Activated B cell treated with CpG ODN at 0.5 μM for 24 hours (primary cell): ENCODE measurements at regions of chr12 and their contacts with region 1.

Region 1: GRCh38 chr12:120086801-120087621 is 29.5 kb downstream of the RAB35 start:
- DNase-seq: peak; percentile 98
- ATAC-seq: peak; percentile 93
- H3K4me3 Mint-ChIP-seq: peak overlapping the region; percentile 76
- H3K27ac Mint-ChIP-seq: peak overlapping the region; percentile 81
- H3K4me1 Mint-ChIP-seq: peaks cover 11% of the 10 kb centered on the region
- H3K27me3 Mint-ChIP-seq: no peaks in the 10 kb centered on the region
- CTCF ChIP-seq: peak; percentile 74

Region 2: DNA sequence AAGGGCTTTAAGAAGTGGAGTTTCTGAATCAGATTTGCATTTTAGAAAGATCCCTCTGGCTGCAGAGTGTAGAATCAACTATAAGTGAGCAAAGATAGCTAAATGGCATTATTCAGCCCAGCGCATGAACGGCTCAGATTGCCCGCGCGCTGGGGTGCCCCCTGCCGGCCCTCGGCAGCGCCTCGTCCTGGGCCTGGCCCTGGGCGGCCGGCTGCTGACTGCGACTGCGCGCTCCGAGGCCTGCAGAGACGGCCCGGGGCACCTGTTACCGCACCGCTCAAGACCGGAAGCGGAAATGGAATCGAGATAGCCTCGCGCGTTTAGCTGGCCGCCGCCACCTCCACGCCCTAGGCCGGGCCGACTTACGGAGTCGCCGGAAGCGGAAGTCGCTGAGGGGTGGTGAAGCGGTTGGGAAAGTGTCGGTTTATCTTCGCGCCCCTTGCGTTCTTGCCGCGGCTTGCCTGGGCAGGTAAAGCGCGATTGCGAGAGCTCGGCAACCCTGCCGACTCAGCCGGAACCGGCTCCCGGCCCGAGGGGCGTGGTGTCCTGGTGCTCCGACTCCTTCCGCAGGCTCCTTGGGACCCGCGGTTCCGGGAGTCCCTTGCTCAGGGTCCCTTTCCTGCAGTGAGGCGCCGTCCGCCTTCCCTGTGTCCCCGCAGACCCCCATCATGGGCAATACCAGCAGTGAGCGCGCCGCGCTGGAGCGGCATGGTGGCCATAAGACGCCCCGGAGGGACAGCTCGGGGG is 419.3 kb before region 1 on chr12 and contains the start of gene PRKAB1:
- CTCF ChIA-PET with region 1: no interaction called
- POLR2A ChIA-PET with region 1: interaction called, 3 read pairs
- intact Hi-C with region 1: loop called (anchors 5 kb)
- DNase-seq: peak; percentile 92
- ATAC-seq: peak; percentile 91
- H3K4me3 Mint-ChIP-seq: peak within 1 kb of the TSS; percentile 90
- H3K27ac Mint-ChIP-seq: peak within 1 kb of the TSS; percentile 92
- H3K4me1 Mint-ChIP-seq: peaks cover 59% of the 10 kb centered on the region
- H3K27me3 Mint-ChIP-seq: no peaks in the 10 kb centered on the region
- CTCF ChIP-seq: peak; percentile 39
- total RNA-seq, gene PRKAB1: 43.9 and 49.1 TPM in 2 replicates

Region 3: GRCh38 chr12:119835068-119835467 is 251.9 kb before region 1 on chr12:
- CTCF ChIA-PET with region 1: no interaction called
- POLR2A ChIA-PET with region 1: no interaction called
- intact Hi-C with region 1: no loop called
- DNase-seq: no peak
- ATAC-seq: no peak
- H3K4me3 Mint-ChIP-seq: no peak overlapping the region
- H3K27ac Mint-ChIP-seq: no peak overlapping the region
- H3K4me1 Mint-ChIP-seq: peaks cover 3% of the 10 kb centered on the region
- H3K27me3 Mint-ChIP-seq: no peaks in the 10 kb centered on the region
- CTCF ChIP-seq: no peak

Region 4: DNA sequence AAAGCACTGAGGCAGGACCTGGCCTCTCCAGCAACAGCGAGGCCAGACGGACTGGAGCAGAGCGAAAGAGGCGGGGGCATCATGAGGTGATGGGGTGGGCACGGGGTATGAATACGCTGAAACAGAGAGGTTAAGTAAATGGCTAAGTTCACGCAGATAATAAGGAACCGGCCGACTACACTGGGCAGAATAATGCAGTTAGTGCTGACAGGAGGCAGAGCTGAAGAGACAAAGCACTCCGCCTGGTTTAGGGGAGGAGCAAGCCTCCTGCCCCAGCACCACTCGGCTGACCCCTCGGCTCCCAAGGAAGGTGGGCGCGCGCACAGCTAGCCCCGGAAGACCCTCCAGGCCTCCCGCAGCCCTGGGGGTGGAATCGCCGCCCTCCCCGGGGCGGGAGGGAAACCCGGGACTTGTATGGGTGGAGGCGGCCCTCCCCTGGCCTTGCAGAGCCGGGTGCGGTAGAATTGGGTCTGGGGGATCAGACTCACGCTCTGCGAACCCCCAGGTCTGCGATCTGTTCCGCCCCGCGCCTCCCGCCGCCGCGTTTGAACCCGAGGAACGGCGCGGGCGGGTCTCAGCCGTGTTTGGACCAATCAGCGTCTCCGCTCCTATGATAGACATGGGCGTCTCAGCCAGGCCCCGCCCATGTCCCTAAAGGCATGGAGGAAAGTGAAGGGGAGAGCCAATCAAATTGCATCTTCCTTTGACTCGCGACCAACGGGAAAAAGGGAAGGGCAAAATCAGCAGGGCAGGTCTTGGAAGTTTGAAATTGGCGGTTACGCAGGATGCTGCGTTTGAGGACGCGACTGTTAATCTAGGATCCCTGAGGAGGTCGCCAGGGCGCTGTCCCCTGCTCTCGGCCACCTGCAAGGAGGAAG is 210.0 kb before region 1 on chr12 and contains the start of gene CIT:
- CTCF ChIA-PET with region 1: no interaction called
- POLR2A ChIA-PET with region 1: no interaction called
- intact Hi-C with region 1: loop called (anchors 2 kb)
- DNase-seq: peak; percentile 72
- ATAC-seq: peak; percentile 100
- H3K4me3 Mint-ChIP-seq: peak within 1 kb of the TSS; percentile 91
- H3K27ac Mint-ChIP-seq: peak within 1 kb of the TSS; percentile 0
- H3K4me1 Mint-ChIP-seq: peaks cover 12% of the 10 kb centered on the region
- H3K27me3 Mint-ChIP-seq: peaks cover 2% of the 10 kb centered on the region
- CTCF ChIP-seq: no peak
- total RNA-seq, gene CIT: 3.6 and 6.1 TPM in 2 replicates

Region 5: DNA sequence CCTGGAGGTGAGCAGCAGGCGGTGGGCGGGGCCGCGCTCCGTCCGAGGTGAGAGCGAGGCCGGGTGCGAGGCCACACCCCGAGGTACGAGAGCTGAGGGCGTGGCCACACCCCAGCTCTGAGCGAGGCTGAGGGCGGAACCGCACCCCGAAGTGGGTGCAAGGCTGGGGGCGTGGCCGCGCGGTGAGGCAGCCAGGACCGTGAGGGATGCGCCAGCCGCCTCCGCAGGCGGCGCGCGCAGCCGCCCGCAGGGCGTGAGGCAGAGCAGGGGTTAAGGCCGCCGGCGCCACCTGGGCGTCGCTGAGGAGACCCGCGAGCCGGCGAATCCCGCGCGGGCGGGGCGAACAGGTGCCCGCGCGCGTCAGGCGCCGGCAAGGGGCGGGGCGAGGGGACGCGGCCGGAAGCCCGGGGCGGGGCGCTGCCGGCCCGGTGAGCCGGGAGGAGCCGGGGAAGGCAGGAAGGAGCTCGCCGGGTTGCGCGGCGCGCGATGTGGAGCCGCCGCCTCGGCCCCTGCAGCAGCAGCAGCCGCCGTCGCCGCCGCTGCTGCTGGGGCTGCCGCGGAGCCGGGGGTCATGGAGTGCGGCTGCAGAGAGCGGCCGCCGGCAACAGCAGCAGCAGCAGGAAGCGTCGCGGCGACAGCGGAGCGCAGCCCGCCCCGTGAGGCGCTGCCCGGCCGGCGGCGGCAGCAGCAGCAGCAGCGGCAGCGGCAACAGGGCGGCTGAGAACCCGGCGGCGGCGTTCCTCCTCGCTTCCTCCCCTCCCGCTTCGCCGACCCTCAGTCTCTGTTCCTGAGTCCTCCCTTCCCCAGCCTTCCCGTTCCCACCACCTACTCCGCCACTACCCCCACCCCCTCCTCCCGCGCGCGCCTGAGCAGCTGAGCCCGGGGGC is 98.0 kb before region 1 on chr12 and contains the start of gene BICDL1:
- CTCF ChIA-PET with region 1: interaction called, 17 read pairs
- POLR2A ChIA-PET with region 1: interaction called, 16 read pairs
- intact Hi-C with region 1: loop called (anchors 1 kb)
- DNase-seq: peak; percentile 96
- ATAC-seq: peak; percentile 83
- H3K4me3 Mint-ChIP-seq: peak within 1 kb of the TSS; percentile 83
- H3K27ac Mint-ChIP-seq: peak within 1 kb of the TSS; percentile 85
- H3K4me1 Mint-ChIP-seq: peaks cover 23% of the 10 kb centered on the region
- H3K27me3 Mint-ChIP-seq: no peaks in the 10 kb centered on the region
- CTCF ChIP-seq: no peak
- total RNA-seq, gene BICDL1: 15.1 and 16.8 TPM in 2 replicates

Region 6: GRCh38 chr12:120110550-120111501 is 23.8 kb after region 1 on chr12:
- CTCF ChIA-PET with region 1: interaction called, 5 read pairs
- POLR2A ChIA-PET with region 1: interaction called, 16 read pairs
- intact Hi-C with region 1: loop called (anchors 1 kb)
- DNase-seq: peak; percentile 59
- ATAC-seq: peak; percentile 89
- H3K4me3 Mint-ChIP-seq: peak overlapping the region; percentile 66
- H3K27ac Mint-ChIP-seq: peak overlapping the region; percentile 87
- H3K4me1 Mint-ChIP-seq: peaks cover 70% of the 10 kb centered on the region
- H3K27me3 Mint-ChIP-seq: no peaks in the 10 kb centered on the region
- CTCF ChIP-seq: no peak

Region 7: GRCh38 chr12:120200364-120200800 is 113.4 kb after region 1 on chr12:
- CTCF ChIA-PET with region 1: interaction called, 5 read pairs
- POLR2A ChIA-PET with region 1: interaction called, 27 read pairs
- intact Hi-C with region 1: loop called (anchors 1 kb)
- DNase-seq: no peak
- ATAC-seq: no peak
- H3K4me3 Mint-ChIP-seq: peak overlapping the region; percentile 95
- H3K27ac Mint-ChIP-seq: peak overlapping the region; percentile 98
- H3K4me1 Mint-ChIP-seq: peaks cover 42% of the 10 kb centered on the region
- H3K27me3 Mint-ChIP-seq: no peaks in the 10 kb centered on the region
- CTCF ChIP-seq: no peak